ENCODE measurements at regions of chr6 and their contacts with region 1.

Region 1: GRCh38 chr6:155248008-155249001 is 15.5 kb upstream of the CLDN20 start:
- DNase-seq: peak; percentile 53 to 83 (median 80)
- ATAC-seq: peak; percentile 93
- H3K4me3 ChIP-seq: peak overlapping the region in 1 of 2 donors; percentile 10
- H3K27ac ChIP-seq: peak overlapping the region; percentile 62 to 77
- H3K4me1 ChIP-seq: no peaks in the 10 kb centered on the region
- H3K27me3 ChIP-seq: no peaks in the 10 kb centered on the region
- CTCF ChIP-seq: peak; percentile 39 to 56

Region 2: GRCh38 chr6:155188707-155189496 is 59.4 kb before region 1 on chr6:
- intact Hi-C with region 1: loop called in 1 of 2 experiments (anchors 5 kb)
- DNase-seq: peak in 2 of 4 donors; percentile 54 to 74
- ATAC-seq: peak; percentile 56
- H3K4me3 ChIP-seq: no peak overlapping the region
- H3K27ac ChIP-seq: peak overlapping the region in 1 of 2 donors; percentile 49
- H3K4me1 ChIP-seq: peaks cover 0 to 10% of the 10 kb centered on the region in 2 donors
- H3K27me3 ChIP-seq: no peaks in the 10 kb centered on the region
- CTCF ChIP-seq: no peak

Region 3: DNA sequence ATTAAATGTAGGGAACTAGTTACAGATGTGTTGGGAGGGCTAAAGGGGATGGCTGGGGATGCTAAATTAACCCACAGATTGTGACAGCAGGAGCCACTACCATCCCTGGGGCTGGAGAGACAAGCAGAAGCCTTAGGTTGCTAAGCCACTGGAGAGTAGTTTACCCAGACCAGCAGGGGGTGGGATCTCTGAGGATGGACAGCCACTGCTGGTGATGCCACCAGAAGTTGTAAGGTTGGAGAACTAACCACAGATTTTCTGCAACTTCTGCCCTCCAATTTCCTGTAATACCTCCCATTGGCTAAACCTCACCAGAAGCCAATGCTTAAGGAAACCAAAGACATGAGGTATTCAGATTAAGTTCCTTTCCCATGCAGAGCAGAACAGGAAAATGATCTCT is 347.0 kb after region 1 on chr6:
- intact Hi-C with region 1: no loop called
- DNase-seq: no peak
- ATAC-seq: no peak
- H3K4me3 ChIP-seq: no peak overlapping the region
- H3K27ac ChIP-seq: no peak overlapping the region
- H3K4me1 ChIP-seq: no peaks in the 10 kb centered on the region
- H3K27me3 ChIP-seq: no peaks in the 10 kb centered on the region
- CTCF ChIP-seq: no peak